MCF 10A (cell line): ENCODE measurements at regions of chr4 and their contacts with region 1.

Region 1: DNA sequence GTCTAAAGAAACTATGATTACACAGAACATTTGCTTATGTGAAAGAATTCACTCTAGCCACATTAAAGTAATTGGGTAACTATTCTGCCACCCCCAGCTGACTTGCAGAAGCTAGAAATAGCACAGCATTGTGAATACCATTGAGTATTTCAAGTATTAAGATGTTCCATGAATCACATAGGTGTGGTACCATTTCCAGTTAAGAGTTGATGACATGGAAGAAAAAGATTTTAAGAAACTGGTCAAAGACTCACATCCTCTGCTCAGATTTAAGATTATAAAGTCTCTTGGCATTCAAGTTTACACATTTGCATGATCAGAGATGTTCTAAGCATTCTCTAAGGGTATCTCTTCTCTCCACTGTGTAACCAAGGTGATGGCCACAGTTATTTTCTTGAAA is 287.5 kb downstream of the CAMK2D start:
- DNase-seq: peak; percentile 59
- H3K4me3 Mint-ChIP-seq: no peak overlapping the region
- H3K27ac Mint-ChIP-seq: peak overlapping the region; percentile 93
- H3K4me1 Mint-ChIP-seq: peaks cover 24% of the 10 kb centered on the region
- H3K27me3 Mint-ChIP-seq: no peaks in the 10 kb centered on the region
- CTCF ChIP-seq: no peak

Region 2: DNA sequence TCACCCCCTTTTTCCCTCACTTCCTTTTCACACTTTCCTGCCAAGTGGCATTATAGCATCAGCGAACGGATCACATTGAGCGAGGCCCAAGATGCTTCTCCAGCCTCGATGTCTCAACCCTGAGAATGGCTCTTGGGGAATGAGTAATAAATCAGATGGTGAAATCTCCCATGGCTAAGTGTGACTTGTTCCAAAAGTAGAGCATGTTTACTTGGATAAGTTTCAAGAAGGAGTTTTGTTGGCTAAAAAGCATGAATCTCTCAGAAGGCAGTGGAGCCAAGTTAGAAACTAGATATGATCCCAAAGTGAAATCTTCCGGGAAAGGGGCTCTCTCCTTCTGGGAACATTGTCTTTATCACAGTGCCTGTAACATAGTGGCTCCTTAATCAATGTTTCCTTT is 28.7 kb before region 1 on chr4:
- CTCF ChIA-PET with region 1: interaction called, 3 read pairs
- POLR2A ChIA-PET with region 1: interaction called, 88 read pairs
- intact Hi-C with region 1: loop called (anchors 2 kb)
- DNase-seq: peak; percentile 99
- H3K4me3 Mint-ChIP-seq: peak overlapping the region; percentile 60
- H3K27ac Mint-ChIP-seq: no peak overlapping the region
- H3K4me1 Mint-ChIP-seq: peaks cover 35% of the 10 kb centered on the region
- H3K27me3 Mint-ChIP-seq: no peaks in the 10 kb centered on the region
- CTCF ChIP-seq: no peak